Caco-2 (cell line): ENCODE measurements at regions of chr19 and their contacts with region 1.

Region 1: DNA sequence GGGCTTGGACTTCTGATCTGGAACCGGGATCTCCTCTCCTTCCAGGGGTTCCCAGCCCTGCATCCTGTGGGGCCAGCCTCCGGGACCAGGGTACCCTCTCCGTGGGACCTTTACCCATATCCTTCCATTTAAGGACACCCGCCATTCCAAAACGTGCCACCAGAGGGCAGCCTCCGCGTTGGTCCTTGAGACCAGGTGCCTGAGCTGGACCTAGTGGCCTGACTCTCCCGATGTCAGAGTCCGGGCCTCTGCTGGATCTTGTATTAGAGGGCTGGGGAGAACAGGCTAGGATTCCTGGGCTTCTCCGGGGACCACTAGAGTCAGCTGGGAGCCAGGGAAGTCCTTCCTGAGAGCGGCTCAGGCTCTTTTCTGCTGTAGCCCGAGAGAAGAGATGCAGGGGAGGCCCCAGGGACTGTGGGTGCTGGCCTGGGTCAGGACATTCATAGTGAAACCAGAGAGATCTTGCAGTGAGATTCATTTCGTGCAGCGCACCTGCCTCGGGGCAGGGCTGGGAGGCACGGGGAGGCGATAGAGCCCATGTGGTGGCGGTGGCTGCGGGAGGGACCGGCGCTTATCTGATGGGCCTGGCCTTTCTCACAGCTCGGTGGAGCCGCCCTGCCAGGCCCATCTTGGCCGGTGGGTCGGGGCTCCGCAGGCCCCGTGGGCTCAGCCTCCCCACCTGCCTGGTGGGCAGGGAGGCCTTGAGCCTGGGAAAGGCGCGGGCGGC is 9.8 kb upstream of the SLC7A10 start:
- DNase-seq: peak; percentile 89 to 92
- H3K4me3 ChIP-seq: no peak overlapping the region
- H3K4me3 Mint-ChIP-seq: no peak overlapping the region
- H3K27ac Mint-ChIP-seq: no peak overlapping the region
- H3K4me1 ChIP-seq: 0 out of 2 replicates have a peak, but pooled peaks cover 4% of the 10 kb centered on the region
- H3K4me1 Mint-ChIP-seq: no peaks in the 10 kb centered on the region
- H3K27me3 ChIP-seq: no peaks in the 10 kb centered on the region
- H3K27me3 Mint-ChIP-seq: peaks cover 2% of the 10 kb centered on the region
- CTCF ChIP-seq: peak; percentile 92 to 97

Region 2: GRCh38 chr19:33125929-33126388 is 109.5 kb before region 1 on chr19:
- CTCF ChIA-PET with region 1: no interaction called
- POLR2A ChIA-PET with region 1: no interaction called
- intact Hi-C with region 1: loop called (anchors 1 kb)
- DNase-seq: peak in 1 of 2 experiments; percentile 66
- H3K4me3 ChIP-seq: no peak overlapping the region
- H3K4me3 Mint-ChIP-seq: no peak overlapping the region
- H3K27ac Mint-ChIP-seq: no peak overlapping the region
- H3K4me1 ChIP-seq: peaks cover 8% of the 10 kb centered on the region
- H3K4me1 Mint-ChIP-seq: peaks cover 10% of the 10 kb centered on the region
- H3K27me3 ChIP-seq: no peaks in the 10 kb centered on the region
- H3K27me3 Mint-ChIP-seq: no peaks in the 10 kb centered on the region
- CTCF ChIP-seq: peak; percentile 88 to 91

Region 3: GRCh38 chr19:33143897-33144405 is 91.5 kb before region 1 on chr19:
- CTCF ChIA-PET with region 1: interaction called, 3 read pairs
- POLR2A ChIA-PET with region 1: no interaction called
- intact Hi-C with region 1: loop called (anchors 5 kb)
- DNase-seq: peak; percentile 63 to 75
- H3K4me3 ChIP-seq: no peak overlapping the region
- H3K4me3 Mint-ChIP-seq: no peak overlapping the region
- H3K27ac Mint-ChIP-seq: no peak overlapping the region
- H3K4me1 ChIP-seq: peaks cover 17% of the 10 kb centered on the region
- H3K4me1 Mint-ChIP-seq: peaks cover 10% of the 10 kb centered on the region
- H3K27me3 ChIP-seq: no peaks in the 10 kb centered on the region
- H3K27me3 Mint-ChIP-seq: no peaks in the 10 kb centered on the region
- CTCF ChIP-seq: peak; percentile 95 to 96